Stomach (tissue), 19 donors: ENCODE measurements at regions of chr6 and their contacts with region 1.

Region 1: GRCh38 chr6:31952140-31952805 is 6.4 kb downstream of the CFB start:
- DNase-seq: peak; percentile 75 to 79
- H3K4me3 ChIP-seq: no peak overlapping the region
- H3K27ac ChIP-seq: peak overlapping the region in 3 of 5 donors; percentile 32 to 39 (median 35)
- H3K4me1 ChIP-seq: peaks cover 0 to 23% (median under 1%) of the 10 kb centered on the region in 4 donors
- H3K27me3 ChIP-seq: no peaks in the 10 kb centered on the region
- CTCF ChIP-seq: peak in 5 of 7 experiments; percentile 43 to 66 (median 62)
- EP300 ChIP-seq: no peak
- POLR2A ChIP-seq: no peak

Region 2: GRCh38 chr6:31908791-31909190 is 43.5 kb before region 1 on chr6:
- intact Hi-C with region 1: loop called (anchors 5 kb)
- DNase-seq: no peak
- H3K4me3 ChIP-seq: no peak overlapping the region
- H3K27ac ChIP-seq: no peak overlapping the region
- H3K4me1 ChIP-seq: peaks cover 0 to 23% (median 7%) of the 10 kb centered on the region in 4 donors
- H3K27me3 ChIP-seq: no peaks in the 10 kb centered on the region
- CTCF ChIP-seq: no peak
- EP300 ChIP-seq: no peak
- POLR2A ChIP-seq: no peak

Region 3: DNA sequence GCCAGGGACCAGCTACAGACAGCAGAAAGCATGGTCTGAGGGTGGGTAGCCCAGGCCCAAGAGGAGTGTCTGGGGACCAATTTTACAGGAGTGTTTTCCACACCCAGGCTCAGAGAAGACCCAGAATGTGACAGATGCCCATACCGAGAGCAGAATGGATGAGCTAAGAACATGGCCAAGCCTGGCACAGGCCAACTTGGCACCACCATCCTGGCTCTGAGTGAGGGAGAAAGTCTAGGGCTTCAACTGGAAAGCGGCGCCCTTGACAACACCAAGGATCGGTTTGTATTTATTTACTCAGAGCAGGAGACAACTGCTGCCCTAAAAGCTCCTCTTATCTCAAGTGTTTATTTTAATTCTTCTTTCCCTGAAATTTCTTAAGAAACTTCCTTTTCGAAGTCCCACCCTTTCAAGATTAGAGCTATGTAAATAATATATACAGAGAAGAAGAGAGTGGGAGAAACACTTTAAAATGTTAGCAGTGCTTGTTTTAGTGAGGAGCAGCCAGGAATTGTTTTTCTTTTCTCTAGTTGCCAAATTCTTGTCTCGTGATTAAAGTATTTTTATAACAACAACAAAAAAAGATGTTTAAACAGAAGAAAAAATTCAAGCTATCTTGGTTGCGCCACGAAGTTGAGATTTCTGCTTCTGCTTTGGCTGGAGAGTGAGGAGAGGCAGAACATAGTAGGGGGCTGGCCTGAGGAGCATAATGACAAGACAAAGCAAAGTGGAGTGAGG is 140.7 kb after region 1 on chr6:
- intact Hi-C with region 1: no loop called
- DNase-seq: peak in 1 of 2 donors; percentile 78
- H3K4me3 ChIP-seq: no peak overlapping the region
- H3K27ac ChIP-seq: peak overlapping the region in 4 of 5 donors; percentile 22 to 84 (median 70)
- H3K4me1 ChIP-seq: peaks cover 22 to 53% (median 38%) of the 10 kb centered on the region in 4 donors
- H3K27me3 ChIP-seq: peaks cover 5 to 35% (median 17%) of the 10 kb centered on the region in 3 donors
- CTCF ChIP-seq: no peak
- EP300 ChIP-seq: no peak
- POLR2A ChIP-seq: no peak